HepG2 (cell line): ENCODE measurements at regions of chr1 and their contacts with region 1.

Region 1: DNA sequence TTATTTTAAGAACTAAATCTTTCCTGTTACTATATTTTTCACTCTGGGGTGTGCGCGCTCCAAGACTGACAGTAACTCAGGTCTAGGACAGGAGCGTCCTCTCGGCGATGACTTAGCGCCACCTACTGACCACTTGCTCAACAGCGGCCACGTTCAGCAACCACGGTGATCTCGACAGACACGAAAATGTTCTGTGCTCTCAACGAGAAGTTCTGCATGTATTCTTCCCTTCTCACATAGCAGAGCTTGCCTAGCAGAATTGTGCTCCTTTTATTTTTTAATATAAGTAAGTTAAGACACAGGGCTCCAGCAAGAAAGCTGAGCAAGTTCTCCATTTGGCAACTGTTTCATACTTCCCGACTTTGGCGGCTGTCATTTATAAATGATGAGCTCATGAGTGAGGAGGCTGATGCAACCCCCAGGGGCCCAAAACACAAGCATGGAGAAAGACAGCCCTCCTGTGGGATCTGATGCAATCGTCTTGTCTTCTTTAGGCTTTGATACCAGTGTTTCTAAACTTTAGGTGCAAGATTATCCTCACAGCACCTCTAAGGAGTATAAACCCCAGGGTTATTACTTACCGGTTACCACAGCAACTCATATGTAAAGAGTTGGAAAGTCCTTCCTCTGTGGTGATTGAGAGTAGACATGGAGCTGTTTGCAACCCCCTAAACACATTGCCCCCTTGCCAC is 92.6 kb downstream of the HHIPL2 start:
- DNase-seq: peak; percentile 47
- ATAC-seq: peak; percentile 99
- H3K4me3 ChIP-seq: peak overlapping the region in 2 of 3 experiments; percentile 27 to 34; a peak in 1 of 6 replicates
- H3K27ac ChIP-seq: no peak overlapping the region
- H3K4me1 ChIP-seq: peaks cover 8% of the 10 kb centered on the region
- H3K27me3 ChIP-seq: peaks cover 0 to 1% of the 10 kb centered on the region in 2 experiments; a peak in 1 of 5 replicates
- CTCF ChIP-seq: peak; percentile 95
- EP300 ChIP-seq: no peak
- POLR2A ChIP-seq: no peak
- RAD21 ChIP-seq: peak; percentile 83

Region 2: DNA sequence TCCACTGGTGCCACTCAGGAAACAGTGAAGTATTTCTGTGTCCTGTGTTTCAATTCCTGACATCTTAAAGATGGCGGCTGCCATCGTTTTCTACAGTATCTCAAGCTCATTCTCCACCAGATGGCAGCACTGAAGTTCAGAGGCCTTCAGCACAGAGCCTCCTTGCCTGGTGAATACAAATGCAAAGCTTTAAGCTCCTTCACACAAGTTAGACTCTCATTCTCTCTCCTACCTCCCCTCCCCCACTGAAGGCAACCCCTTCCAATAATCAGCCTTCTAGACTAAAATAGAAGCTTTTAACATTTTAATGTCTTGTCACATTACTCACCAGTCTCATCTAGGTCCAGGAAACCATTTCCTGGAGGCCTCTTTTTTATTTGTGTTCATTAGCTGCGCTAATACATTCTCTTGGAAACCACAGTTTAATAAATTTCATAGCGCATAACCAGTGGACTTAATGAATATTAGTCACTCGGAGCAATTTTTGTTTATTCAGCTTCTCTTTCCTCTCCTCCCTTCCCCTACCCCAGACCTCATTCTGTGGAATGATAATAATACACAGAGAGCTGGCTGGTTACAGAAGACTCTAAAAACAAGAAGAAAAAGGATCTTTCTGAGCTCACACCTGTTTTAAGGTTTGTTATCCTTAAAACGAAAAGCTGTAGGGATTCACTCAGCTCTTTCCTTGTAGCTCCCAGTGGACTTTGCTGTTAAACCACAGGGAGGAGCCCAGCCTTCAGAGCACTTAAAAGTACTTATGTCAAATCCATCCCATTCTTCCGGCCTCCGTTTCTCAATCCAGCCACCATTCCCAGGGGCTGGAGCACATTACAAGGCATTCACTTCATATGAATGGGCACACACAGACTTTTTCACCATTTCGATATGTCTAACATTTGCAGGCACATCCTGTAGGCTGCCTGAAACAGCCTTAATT is 1191.2 kb before region 1 on chr1:
- CTCF ChIA-PET with region 1: no interaction called
- POLR2A ChIA-PET with region 1: no interaction called
- in situ Hi-C with region 1: no loop called
- intact Hi-C with region 1: loop called (anchors 5 kb)
- DNase-seq: peak; percentile 52
- ATAC-seq: peak; percentile 80
- H3K4me3 ChIP-seq: no peak overlapping the region
- H3K27ac ChIP-seq: no peak overlapping the region
- H3K4me1 ChIP-seq: no peaks in the 10 kb centered on the region
- H3K27me3 ChIP-seq: no peaks in the 10 kb centered on the region
- CTCF ChIP-seq: peak; percentile 65
- EP300 ChIP-seq: no peak
- POLR2A ChIP-seq: no peak
- RAD21 ChIP-seq: no peak

Region 3: DNA sequence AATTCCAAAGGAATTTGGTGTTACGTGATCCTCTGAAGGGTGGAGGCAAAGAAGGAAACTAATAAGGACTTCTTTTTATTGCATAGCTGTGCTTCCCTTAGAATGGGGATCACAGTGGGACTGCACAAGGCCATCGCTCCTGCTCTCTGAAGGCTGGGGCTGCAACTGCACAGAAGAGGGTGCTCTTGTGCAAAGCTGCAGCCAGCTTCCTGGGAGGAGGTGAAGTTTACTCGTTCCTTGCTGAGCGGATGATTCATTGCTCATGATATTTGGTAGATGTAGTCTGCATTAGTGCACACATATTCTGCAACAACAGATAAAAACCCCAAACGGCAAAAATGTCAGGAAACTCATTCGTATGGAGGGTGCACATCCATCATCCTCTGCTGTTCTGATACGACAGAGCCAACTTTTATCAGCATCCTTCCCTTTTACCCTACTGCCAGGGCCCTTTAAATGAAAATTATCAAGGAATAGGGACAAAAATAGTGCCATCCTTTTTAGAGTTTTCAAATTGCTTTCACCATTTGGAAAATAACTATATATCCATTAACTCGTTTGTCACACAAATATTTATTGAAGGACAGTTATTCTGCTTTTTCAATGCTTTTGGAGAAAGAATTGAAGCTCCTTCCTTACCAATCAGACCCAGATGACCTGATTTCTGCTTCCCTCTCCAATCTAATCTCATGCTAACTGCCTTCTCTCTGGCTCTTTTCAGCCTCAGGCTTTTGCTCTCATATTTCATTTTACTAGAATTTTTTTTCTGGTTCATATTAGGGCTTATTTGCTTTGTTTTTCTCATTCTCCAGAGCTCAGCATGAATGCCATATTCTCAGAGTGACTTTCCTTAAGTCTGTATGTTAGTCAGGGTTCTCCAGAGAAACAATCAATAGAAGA is 977.0 kb before region 1 on chr1:
- CTCF ChIA-PET with region 1: no interaction called
- POLR2A ChIA-PET with region 1: no interaction called
- in situ Hi-C with region 1: no loop called
- intact Hi-C with region 1: loop called (anchors 2 kb)
- DNase-seq: peak; percentile 12
- ATAC-seq: peak; percentile 92
- H3K4me3 ChIP-seq: no peak overlapping the region
- H3K27ac ChIP-seq: no peak overlapping the region
- H3K4me1 ChIP-seq: no peaks in the 10 kb centered on the region
- H3K27me3 ChIP-seq: no peaks in the 10 kb centered on the region
- CTCF ChIP-seq: peak; percentile 80
- EP300 ChIP-seq: no peak
- POLR2A ChIP-seq: no peak
- RAD21 ChIP-seq: peak; percentile 57

Region 4: GRCh38 chr1:222095606-222096475 is 359.5 kb before region 1 on chr1:
- CTCF ChIA-PET with region 1: interaction called, 4 read pairs
- POLR2A ChIA-PET with region 1: no interaction called
- in situ Hi-C with region 1: no loop called
- intact Hi-C with region 1: loop called (anchors 1 kb)
- DNase-seq: peak; percentile 7
- ATAC-seq: peak; percentile 85
- H3K4me3 ChIP-seq: no peak overlapping the region
- H3K27ac ChIP-seq: no peak overlapping the region
- H3K4me1 ChIP-seq: peaks cover 11% of the 10 kb centered on the region; the same call in 1 of the 2 replicates
- H3K27me3 ChIP-seq: no peaks in the 10 kb centered on the region; a peak in 1 of 5 replicates
- CTCF ChIP-seq: peak; percentile 68
- EP300 ChIP-seq: no peak
- POLR2A ChIP-seq: no peak
- RAD21 ChIP-seq: no peak

Region 5: GRCh38 chr1:222124602-222125001 is 330.7 kb before region 1 on chr1:
- CTCF ChIA-PET with region 1: interaction called, 13 read pairs
- POLR2A ChIA-PET with region 1: no interaction called
- in situ Hi-C with region 1: loop called (anchors 5 kb)
- intact Hi-C with region 1: no loop called
- DNase-seq: no peak
- ATAC-seq: peak; percentile 85
- H3K4me3 ChIP-seq: no peak overlapping the region
- H3K27ac ChIP-seq: no peak overlapping the region
- H3K4me1 ChIP-seq: no peaks in the 10 kb centered on the region
- H3K27me3 ChIP-seq: no peaks in the 10 kb centered on the region
- CTCF ChIP-seq: peak; percentile 54
- EP300 ChIP-seq: no peak
- POLR2A ChIP-seq: no peak
- RAD21 ChIP-seq: no peak